Heart left ventricle (tissue), 16 donors: ENCODE measurements at regions of chr21 and their contacts with region 1.

Region 1: DNA sequence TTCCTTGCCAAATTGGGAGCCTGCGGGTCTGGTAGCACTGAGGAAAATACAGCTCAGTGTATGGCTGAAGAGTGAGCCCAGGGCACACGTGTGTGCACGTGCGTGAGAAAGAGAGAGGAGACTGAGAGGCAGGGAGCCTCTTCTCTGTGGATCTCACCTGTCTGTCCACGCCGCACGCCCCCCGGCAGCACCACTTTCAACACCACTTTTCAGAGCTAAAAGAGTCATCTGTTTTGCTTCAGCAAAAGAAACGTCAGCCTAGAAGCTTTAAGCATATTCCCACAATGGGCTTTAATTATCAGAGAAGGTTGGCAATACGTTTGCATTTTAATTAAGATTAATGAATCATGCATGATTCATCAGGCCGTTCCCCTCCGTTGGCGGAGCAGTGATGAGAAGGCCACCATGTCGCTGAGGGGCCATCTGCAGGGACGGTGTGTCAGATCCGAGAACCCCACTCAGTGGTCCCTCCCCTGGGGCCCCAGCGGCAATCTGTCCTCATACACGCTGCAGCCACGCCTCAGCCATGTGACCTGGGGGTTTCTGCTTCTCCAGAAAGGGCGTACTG is 56.8 kb downstream of the SIK1 start:
- DNase-seq: no peak
- ATAC-seq: no peak
- H3K4me3 ChIP-seq: no peak overlapping the region
- H3K27ac ChIP-seq: no peak overlapping the region
- H3K4me1 ChIP-seq: peaks cover 0 to 11% (median 5%) of the 10 kb centered on the region in 12 donors
- H3K27me3 ChIP-seq: no peaks in the 10 kb centered on the region
- CTCF ChIP-seq: no peak
- POLR2A ChIP-seq: no peak

Region 2: GRCh38 chr21:42905195-42905594 is 465.0 kb before region 1 on chr21:
- intact Hi-C with region 1: no loop called
- DNase-seq: no peak
- ATAC-seq: no peak
- H3K4me3 ChIP-seq: no peak overlapping the region
- H3K27ac ChIP-seq: no peak overlapping the region
- H3K4me1 ChIP-seq: peaks cover 0 to 8% (median 2%) of the 10 kb centered on the region in 12 donors
- H3K27me3 ChIP-seq: no peaks in the 10 kb centered on the region
- CTCF ChIP-seq: no peak
- POLR2A ChIP-seq: no peak

Region 3: DNA sequence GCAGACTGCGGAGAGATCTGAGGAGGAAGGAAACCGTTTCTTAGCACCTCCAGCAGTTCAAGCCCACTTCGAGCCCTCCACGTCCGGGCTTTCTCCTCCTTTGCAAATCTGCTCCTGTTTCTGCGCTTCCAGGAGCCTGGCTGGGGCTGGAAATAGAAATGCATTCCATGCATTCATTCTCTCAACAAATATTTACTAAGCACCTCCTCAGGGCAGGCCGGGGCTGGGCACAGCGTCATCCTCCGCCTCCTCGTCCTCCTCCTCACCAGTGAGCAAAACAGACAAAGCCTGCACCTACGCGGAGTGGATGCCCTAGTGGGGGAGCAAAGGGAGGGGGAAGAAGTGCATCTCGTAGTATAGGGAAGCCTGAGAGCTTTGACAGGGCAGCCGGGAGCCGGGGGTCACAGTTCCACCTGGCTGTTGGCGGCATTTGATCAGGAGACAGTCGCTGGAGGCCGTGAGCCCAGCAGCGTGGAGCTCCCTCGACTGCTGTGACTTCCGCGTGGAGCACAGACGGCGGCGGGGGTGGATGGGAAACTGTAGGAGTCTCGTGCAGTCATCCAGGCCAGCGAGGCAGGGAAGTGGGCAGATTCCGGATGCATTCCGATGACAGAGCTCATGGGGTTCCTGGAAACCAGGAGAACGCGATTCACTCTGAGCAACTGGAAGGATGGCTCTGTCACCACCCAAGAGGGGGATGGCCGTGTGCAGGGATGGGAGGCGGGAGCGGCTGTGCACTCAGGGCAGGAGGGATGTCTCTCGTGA is 36.7 kb before region 1 on chr21:
- intact Hi-C with region 1: loop called in 1 of 10 experiments (anchors 2 kb)
- DNase-seq: peak; percentile 47 to 74 (median 57)
- ATAC-seq: peak; percentile 27 to 69 (median 56)
- H3K4me3 ChIP-seq: peak overlapping the region in 7 of 12 donors; percentile 1 to 24 (median 14)
- H3K27ac ChIP-seq: peak overlapping the region in 9 of 12 donors; percentile 16 to 77 (median 60)
- H3K4me1 ChIP-seq: peaks cover 0 to 27% (median 15%) of the 10 kb centered on the region in 12 donors
- H3K27me3 ChIP-seq: no peaks in the 10 kb centered on the region
- CTCF ChIP-seq: no peak
- POLR2A ChIP-seq: no peak